Activated CD8-positive, alpha-beta T cell treated with anti-CD3 and anti-CD28 coated beads for 36 hours (primary cell): ENCODE measurements at regions of chr15 and their contacts with region 1.

Region 1: GRCh38 chr15:89129123-89129815 is 41.0 kb downstream of the ABHD2 start:
- DNase-seq: peak; percentile 78
- ATAC-seq: peak; percentile 76
- H3K4me3 Mint-ChIP-seq: no peak overlapping the region
- H3K27ac Mint-ChIP-seq: no peak overlapping the region
- H3K4me1 Mint-ChIP-seq: peaks cover 22% of the 10 kb centered on the region
- H3K27me3 Mint-ChIP-seq: no peaks in the 10 kb centered on the region
- CTCF ChIP-seq: peak; percentile 86

Region 2: GRCh38 chr15:89087830-89088604 is 41.3 kb before region 1 on chr15 and contains the start of gene ABHD2:
- CTCF ChIA-PET with region 1: interaction called, 45 read pairs
- POLR2A ChIA-PET with region 1: interaction called, 7 read pairs
- intact Hi-C with region 1: loop called (anchors 5 kb)
- DNase-seq: peak; percentile 99
- ATAC-seq: peak; percentile 98
- H3K4me3 Mint-ChIP-seq: no peak within 1 kb of the TSS
- H3K27ac Mint-ChIP-seq: peak within 1 kb of the TSS; percentile 18
- H3K4me1 Mint-ChIP-seq: peaks cover 36% of the 10 kb centered on the region
- H3K27me3 Mint-ChIP-seq: no peaks in the 10 kb centered on the region
- CTCF ChIP-seq: no peak
- total RNA-seq, gene ABHD2: 36.8 to 38.9 TPM

Region 3: GRCh38 chr15:89112341-89112971 is 16.8 kb before region 1 on chr15:
- CTCF ChIA-PET with region 1: interaction called, 102 read pairs
- POLR2A ChIA-PET with region 1: no interaction called
- intact Hi-C with region 1: no loop called
- DNase-seq: no peak
- ATAC-seq: peak; percentile 45
- H3K4me3 Mint-ChIP-seq: no peak overlapping the region
- H3K27ac Mint-ChIP-seq: no peak overlapping the region
- H3K4me1 Mint-ChIP-seq: peaks cover 24% of the 10 kb centered on the region
- H3K27me3 Mint-ChIP-seq: no peaks in the 10 kb centered on the region
- CTCF ChIP-seq: no peak

Region 4: GRCh38 chr15:89150762-89151664 is 21.7 kb after region 1 on chr15:
- CTCF ChIA-PET with region 1: interaction called, 10 read pairs
- POLR2A ChIA-PET with region 1: no interaction called
- intact Hi-C with region 1: no loop called
- DNase-seq: no peak
- ATAC-seq: no peak
- H3K4me3 Mint-ChIP-seq: no peak overlapping the region
- H3K27ac Mint-ChIP-seq: no peak overlapping the region
- H3K4me1 Mint-ChIP-seq: peaks cover 3% of the 10 kb centered on the region
- H3K27me3 Mint-ChIP-seq: no peaks in the 10 kb centered on the region
- CTCF ChIP-seq: no peak

Region 5: DNA sequence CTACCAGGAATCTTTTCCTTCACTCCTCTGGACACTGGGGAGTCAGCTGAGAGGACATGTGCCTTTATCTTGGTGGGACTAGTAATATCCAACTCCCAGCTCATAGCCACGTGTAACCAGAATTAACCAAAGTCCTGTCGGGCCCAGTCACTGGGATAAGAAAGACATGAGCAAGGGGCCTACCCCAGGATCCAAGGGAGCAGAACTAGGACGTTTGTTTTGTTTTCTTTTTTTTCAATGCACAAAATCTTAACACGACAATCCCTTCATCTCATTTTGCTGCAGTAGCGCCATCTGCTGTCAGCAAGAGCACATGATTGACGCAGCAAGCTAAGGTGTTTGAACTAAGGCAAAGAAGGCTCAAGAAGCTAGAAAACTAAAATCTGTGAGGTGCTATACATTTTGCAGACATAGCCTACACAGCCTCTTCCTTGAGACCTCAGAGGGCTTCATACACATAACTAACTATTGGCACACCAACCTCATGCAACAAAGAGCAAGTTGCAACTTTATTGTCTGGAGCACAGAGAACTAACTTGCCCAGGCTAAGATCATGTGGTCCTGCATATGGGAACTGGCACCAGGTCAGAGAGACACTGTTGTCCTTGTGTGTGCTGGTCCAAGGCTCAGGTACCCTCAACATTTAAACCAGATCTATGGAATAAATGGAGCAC is 48.5 kb after region 1 on chr15:
- CTCF ChIA-PET with region 1: interaction called, 50 read pairs
- POLR2A ChIA-PET with region 1: interaction called, 3 read pairs
- intact Hi-C with region 1: no loop called
- DNase-seq: peak; percentile 78
- ATAC-seq: peak; percentile 35
- H3K4me3 Mint-ChIP-seq: no peak overlapping the region
- H3K27ac Mint-ChIP-seq: peak overlapping the region; percentile 36
- H3K4me1 Mint-ChIP-seq: peaks cover 35% of the 10 kb centered on the region
- H3K27me3 Mint-ChIP-seq: no peaks in the 10 kb centered on the region
- CTCF ChIP-seq: peak; percentile 83

Region 6: DNA sequence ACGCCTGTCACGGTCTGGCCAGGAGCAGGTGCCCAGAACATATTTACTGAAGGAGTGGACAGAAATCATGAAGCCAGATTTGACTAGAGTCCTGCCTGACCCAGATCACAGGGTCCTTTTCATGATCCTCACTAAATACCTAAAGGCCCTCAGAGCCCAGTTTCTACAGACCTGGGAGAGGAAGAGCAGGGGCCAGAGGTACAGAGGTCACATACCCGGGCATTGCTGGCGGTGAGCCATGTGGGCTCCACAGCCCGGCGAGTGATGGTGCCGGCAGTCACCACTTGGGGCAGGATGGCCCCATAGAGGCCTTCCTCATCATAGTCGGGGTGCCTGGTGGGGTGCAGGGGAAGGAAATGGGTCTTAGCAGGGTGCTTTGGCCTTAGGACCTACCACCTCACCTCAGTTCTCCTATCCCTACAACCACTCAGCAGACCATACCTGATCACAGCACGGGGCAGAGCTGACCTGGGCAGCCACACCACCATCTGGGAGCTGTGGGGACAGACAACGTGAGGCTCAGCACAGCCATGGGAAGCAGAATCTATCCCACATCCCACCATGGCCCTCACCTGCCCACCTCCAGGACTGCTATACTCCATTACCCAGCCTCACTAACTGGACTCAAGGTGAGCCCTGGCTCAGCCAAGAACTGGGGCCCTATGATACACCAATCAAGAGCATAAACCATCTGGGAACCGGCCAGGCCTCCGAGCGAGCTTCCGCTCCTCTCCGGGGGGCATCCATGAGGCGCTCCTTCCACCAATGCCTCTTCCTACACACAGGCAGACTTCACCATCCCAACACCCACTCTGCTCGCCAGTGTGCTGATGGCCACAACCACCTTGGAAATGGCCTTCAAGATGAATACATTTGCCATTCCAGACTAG is 192.5 kb after region 1 on chr15:
- CTCF ChIA-PET with region 1: no interaction called
- POLR2A ChIA-PET with region 1: no interaction called
- intact Hi-C with region 1: no loop called
- DNase-seq: no peak
- ATAC-seq: no peak
- H3K4me3 Mint-ChIP-seq: no peak overlapping the region
- H3K27ac Mint-ChIP-seq: peak overlapping the region; percentile 8
- H3K4me1 Mint-ChIP-seq: peaks cover 14% of the 10 kb centered on the region
- H3K27me3 Mint-ChIP-seq: no peaks in the 10 kb centered on the region
- CTCF ChIP-seq: no peak

Region 7: DNA sequence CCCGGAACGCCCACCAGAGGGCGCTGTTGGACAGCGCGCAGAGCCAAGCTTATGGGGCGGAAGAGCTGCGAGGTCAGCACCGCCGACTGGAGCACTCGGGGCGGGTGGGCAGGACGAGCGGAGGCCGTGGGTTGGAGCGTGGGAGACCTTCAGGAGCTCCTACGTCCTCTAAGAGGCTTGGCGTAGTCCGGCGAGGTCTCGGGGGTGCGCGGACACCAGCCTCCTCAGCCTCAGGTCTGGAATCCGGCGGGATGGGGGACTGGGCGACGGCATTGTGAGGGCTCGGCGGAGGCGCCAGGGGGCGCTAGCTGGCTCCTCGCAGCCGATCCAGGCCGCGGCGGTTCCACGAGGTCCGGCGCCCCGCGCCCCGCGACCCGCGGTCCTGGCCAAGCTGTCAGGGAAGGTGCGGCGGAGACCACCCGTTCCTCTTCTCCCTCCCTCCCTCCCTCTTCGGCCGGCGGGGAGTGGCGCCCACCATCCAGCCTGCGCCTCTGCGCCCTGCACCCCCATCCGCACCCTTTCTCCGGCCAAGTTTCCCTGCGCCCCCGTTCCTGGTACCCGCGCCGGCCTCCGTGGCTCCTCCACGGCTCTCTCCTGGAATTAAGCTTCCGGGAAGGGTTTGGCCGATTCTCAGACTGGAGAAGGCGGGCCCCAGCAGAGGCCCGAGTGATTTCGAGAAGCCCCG is 229.6 kb after region 1 on chr15:
- CTCF ChIA-PET with region 1: no interaction called
- POLR2A ChIA-PET with region 1: no interaction called
- intact Hi-C with region 1: no loop called
- DNase-seq: peak; percentile 85
- ATAC-seq: peak; percentile 93
- H3K4me3 Mint-ChIP-seq: peak overlapping the region; percentile 75
- H3K27ac Mint-ChIP-seq: no peak overlapping the region
- H3K4me1 Mint-ChIP-seq: peaks cover 3% of the 10 kb centered on the region
- H3K27me3 Mint-ChIP-seq: peaks cover 75% of the 10 kb centered on the region
- CTCF ChIP-seq: peak; percentile 97